HepG2 (cell line): ENCODE measurements at regions of chr10 and their contacts with region 1.

Region 1: DNA sequence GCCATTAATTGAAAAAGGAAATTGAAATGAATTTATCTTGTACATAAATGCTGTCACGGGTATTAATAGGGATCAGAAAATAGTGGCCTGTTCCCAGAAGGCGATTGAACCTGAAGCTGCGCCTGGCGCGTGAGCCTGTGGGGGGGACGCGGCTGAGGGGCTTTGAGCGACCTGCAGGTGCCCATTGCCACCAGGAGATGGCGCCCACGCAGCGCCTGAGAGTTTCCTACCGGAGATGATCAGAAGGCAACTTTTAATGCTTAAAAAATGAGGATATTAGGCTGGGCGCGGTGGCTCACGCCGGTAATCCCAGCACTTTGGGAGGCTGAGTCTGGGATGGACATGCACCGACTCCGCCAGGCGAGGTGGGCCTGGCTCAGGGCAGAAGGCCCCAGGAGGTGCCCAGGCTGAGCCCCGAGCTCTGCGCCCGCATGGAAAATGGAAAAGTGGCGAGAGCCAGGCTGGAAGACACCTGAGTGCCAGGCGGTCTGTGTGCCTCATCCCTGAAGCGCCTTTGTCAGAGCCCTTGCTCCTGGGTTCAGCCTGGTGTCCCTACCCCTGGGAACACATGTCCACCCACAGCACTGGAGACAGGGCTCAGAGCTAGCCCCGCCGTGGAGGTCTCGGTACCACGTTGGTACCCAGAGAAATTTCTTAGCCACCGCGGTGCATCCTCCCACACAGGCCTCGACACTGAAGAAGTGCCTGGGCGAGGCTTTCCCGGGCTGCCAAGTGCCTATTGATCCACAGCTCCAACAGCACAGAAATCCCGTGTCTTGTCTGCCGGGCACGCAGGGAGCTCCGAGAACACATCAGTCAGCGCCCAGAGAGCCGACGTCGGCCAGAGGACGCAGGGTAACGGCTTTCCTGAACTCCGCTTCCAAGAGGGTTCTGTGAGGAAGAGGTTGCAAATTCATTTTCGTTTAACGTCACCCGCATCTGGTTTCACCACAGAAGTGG is 117.4 kb downstream of the INPP5A start:
- DNase-seq: peak; percentile 20
- ATAC-seq: peak; percentile 68
- H3K4me3 ChIP-seq: no peak overlapping the region
- H3K27ac ChIP-seq: no peak overlapping the region
- H3K4me1 ChIP-seq: no peaks in the 10 kb centered on the region
- H3K27me3 ChIP-seq: no peaks in the 10 kb centered on the region
- CTCF ChIP-seq: peak; percentile 92
- EP300 ChIP-seq: no peak
- POLR2A ChIP-seq: no peak
- RAD21 ChIP-seq: peak; percentile 86

Region 2: DNA sequence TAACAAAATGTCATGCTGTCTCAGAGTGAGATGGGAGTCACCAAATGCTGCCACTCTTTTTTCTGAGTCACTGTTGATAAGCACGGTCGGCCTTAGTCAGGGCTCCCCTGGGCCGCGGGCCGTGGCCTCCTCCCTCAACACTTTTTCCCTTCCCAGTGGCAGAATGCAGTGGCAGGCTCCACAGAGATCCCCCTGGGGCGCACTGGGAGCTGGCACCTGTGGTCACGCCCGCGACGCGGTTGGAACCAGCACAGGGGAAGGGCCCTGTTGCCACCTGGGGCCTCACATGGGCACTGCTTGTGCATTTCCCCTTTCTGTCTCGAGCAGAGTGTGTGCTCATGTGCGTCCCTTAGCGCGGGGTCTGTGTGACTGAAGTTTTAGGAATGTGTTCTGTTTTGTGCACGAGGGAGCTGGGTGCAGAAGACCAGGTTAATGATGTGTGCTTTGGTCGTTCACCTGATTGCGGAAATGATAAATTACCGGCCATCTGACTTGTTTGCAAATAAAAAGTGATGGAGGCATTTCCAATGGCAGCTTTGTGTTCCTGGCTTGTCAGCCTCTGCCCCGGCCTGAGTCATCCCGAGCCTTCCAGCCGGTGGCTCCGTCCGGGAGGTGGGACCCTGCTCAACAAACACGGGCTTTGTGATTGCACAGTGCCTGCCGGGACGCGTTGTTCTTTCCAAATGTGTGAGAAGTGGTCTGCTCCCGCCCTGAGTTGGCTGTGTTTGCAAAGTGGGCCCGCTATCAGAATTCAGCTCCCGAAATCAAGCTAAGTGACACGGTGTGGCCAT is 30.3 kb after region 1 on chr10:
- CTCF ChIA-PET with region 1: no interaction called
- POLR2A ChIA-PET with region 1: no interaction called
- in situ Hi-C with region 1: no loop called
- intact Hi-C with region 1: loop called (anchors 1 kb)
- DNase-seq: peak; percentile 90
- ATAC-seq: peak; percentile 97
- H3K4me3 ChIP-seq: peak overlapping the region; percentile 40 to 69 (median 52)
- H3K27ac ChIP-seq: peak overlapping the region; percentile 77
- H3K4me1 ChIP-seq: peaks cover 24% of the 10 kb centered on the region
- H3K27me3 ChIP-seq: no peaks in the 10 kb centered on the region
- CTCF ChIP-seq: peak; percentile 36
- EP300 ChIP-seq: peak in 1 of 2 experiments; percentile 49; a peak in 1 of 4 replicates
- POLR2A ChIP-seq: no peak; a peak in 1 of 4 replicates
- RAD21 ChIP-seq: no peak

Region 3: DNA sequence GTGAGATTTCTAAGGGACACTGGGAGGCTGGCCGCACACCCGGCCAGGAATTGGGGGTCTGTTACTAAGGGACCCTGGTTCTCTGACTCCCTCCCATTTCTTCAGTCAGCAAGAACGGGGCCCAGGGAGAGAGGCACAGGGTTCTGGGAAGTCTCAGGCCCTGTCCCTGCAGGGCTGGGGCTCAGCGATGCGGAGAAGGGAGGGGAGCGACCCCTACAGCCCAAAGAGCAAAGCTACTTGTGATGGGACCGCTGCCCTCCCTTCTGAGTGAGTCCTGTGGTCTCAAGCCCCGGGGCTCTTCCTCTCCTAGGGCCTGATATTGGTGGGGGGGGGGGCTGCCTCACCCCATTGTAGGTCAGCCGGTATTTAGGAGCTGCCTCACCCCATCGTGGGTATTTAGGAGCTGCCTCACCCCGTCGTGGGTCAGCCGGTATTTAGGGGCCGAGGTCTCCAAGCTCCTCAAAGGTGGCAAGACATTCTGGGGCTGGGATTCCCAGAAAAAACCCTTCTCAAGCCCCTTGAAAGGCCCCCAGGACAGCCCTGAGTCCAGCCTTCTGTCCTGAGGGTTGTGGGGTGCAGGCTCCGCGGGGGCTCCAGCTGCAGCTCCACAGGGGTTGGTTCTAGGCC is 147.8 kb after region 1 on chr10:
- CTCF ChIA-PET with region 1: no interaction called
- POLR2A ChIA-PET with region 1: no interaction called
- in situ Hi-C with region 1: loop called (anchors 5 kb)
- intact Hi-C with region 1: no loop called
- DNase-seq: peak; percentile 29
- ATAC-seq: peak; percentile 72
- H3K4me3 ChIP-seq: no peak overlapping the region
- H3K27ac ChIP-seq: no peak overlapping the region
- H3K4me1 ChIP-seq: no peaks in the 10 kb centered on the region
- H3K27me3 ChIP-seq: peaks cover 4 to 45% of the 10 kb centered on the region in 2 experiments; a peak in 4 of 5 replicates
- CTCF ChIP-seq: peak; percentile 57
- EP300 ChIP-seq: no peak
- POLR2A ChIP-seq: no peak
- RAD21 ChIP-seq: no peak

Region 4: DNA sequence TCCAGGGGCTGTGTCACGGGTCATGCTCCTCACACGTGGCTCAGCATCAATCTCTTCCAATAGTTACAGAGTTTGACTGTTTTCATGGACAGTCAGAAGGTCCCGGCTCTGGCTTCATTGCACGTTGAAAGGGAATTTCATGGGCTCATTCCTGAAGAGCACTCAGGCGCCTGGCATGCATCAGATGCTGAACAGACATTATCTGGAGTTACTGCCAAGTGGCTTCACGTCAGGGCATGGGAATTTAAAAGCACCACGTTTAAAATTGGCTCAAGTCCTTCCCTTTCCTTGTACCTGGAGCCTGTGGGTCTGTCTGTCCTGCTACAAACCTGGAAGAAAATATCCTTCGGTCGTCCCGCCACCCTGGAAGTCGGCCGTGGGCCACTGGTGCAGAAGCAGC is 237.0 kb after region 1 on chr10:
- CTCF ChIA-PET with region 1: no interaction called
- POLR2A ChIA-PET with region 1: no interaction called
- in situ Hi-C with region 1: loop called (anchors 10 kb)
- intact Hi-C with region 1: loop called (anchors 10 kb)
- DNase-seq: no peak
- ATAC-seq: no peak
- H3K4me3 ChIP-seq: no peak overlapping the region
- H3K27ac ChIP-seq: no peak overlapping the region
- H3K4me1 ChIP-seq: no peaks in the 10 kb centered on the region
- H3K27me3 ChIP-seq: peaks cover 5 to 29% of the 10 kb centered on the region in 2 experiments; a peak in 4 of 5 replicates
- CTCF ChIP-seq: no peak
- EP300 ChIP-seq: no peak
- POLR2A ChIP-seq: no peak
- RAD21 ChIP-seq: no peak